Breast epithelium (tissue), 4 donors: ENCODE measurements at regions of chr22 and their contacts with region 1.

Region 1: GRCh38 chr22:46491923-46492322 is 45.5 kb downstream of the CELSR1 start:
- DNase-seq: peak; percentile 59 to 85
- H3K4me3 ChIP-seq: no peak overlapping the region
- H3K27ac ChIP-seq: peak overlapping the region; percentile 36 to 50
- H3K4me1 ChIP-seq: no peaks in the 10 kb centered on the region
- H3K27me3 ChIP-seq: no peaks in the 10 kb centered on the region
- CTCF ChIP-seq: no peak
- POLR2A ChIP-seq: no peak

Region 2: GRCh38 chr22:46508491-46508999 is 16.6 kb after region 1 on chr22:
- intact Hi-C with region 1: no loop called
- DNase-seq: no peak
- H3K4me3 ChIP-seq: no peak overlapping the region
- H3K27ac ChIP-seq: no peak overlapping the region
- H3K4me1 ChIP-seq: no peaks in the 10 kb centered on the region
- H3K27me3 ChIP-seq: no peaks in the 10 kb centered on the region
- CTCF ChIP-seq: no peak
- POLR2A ChIP-seq: no peak

Region 3: GRCh38 chr22:46996595-46997310 is 504.8 kb after region 1 on chr22:
- intact Hi-C with region 1: loop called (anchors 10 kb)
- DNase-seq: no peak
- H3K4me3 ChIP-seq: no peak overlapping the region
- H3K27ac ChIP-seq: no peak overlapping the region
- H3K4me1 ChIP-seq: no peaks in the 10 kb centered on the region
- H3K27me3 ChIP-seq: no peaks in the 10 kb centered on the region
- CTCF ChIP-seq: no peak
- POLR2A ChIP-seq: no peak